ENCODE measurements at regions of chr16 and their contacts with region 1.

Region 1: DNA sequence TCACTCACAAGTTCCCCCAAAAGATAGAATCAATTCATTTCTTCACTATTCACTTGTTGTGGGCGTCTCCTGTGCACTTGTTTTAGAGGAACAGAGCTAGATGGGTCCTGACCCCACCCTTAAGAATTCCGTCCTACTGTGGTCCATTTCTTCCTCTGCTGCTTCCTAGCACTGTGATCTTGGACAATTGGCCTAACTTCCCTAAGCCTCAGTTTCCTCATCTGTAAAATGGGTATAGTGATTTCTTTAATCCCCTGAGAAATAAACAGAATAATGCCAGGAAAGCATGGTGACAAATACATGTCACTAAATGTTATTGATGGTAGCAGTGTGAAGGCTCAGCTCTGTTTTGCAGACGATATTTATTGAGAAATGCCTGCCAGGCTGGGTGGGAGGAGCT is 9.9 kb downstream of the BMERB1 start:
- DNase-seq: no peak
- ATAC-seq: no peak
- H3K4me3 Mint-ChIP-seq: no peak overlapping the region
- H3K27ac Mint-ChIP-seq: no peak overlapping the region
- H3K4me1 Mint-ChIP-seq: peaks cover 2% of the 10 kb centered on the region
- H3K27me3 Mint-ChIP-seq: peaks cover 4% of the 10 kb centered on the region

Region 2: GRCh38 chr16:15466886-15467781 is 22.9 kb after region 1 on chr16:
- POLR2A ChIA-PET with region 1: interaction called, 10 read pairs
- DNase-seq: no peak
- ATAC-seq: no peak
- H3K4me3 Mint-ChIP-seq: no peak overlapping the region
- H3K27ac Mint-ChIP-seq: no peak overlapping the region
- H3K4me1 Mint-ChIP-seq: no peaks in the 10 kb centered on the region
- H3K27me3 Mint-ChIP-seq: peaks cover 9% of the 10 kb centered on the region

Region 3: DNA sequence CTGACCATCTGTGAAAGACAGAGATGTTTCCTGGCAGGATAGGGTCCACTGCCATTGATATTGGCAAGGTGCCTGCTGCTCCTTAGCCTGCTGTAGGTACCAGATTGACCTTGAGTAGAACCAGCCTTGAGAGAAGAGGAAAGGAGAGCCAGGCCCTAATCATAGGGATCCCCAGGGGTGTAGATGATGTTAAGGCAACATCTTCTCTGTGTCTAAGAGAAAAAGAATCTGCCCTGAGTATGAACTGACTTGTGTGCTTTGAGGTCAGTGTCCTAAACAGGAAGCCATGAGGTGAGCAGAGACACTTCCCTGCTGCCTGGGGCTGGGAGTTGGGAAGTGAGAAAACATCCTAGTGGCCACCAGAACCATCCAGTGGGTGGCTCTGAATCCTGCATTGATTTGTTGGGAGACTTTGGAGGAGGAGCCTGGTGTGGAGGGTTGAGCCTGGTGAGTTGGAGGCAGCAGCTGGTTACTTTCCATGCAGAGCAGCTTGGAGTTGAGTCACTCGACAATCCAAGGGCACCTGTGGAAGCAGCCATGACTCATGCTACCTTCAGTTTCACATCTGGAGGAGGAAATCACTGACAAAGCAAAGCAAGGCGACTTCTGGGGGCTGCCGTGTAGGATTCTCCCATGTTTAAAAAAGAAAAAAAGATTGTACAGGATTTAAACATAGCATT is 37.9 kb after region 1 on chr16:
- POLR2A ChIA-PET with region 1: no interaction called
- DNase-seq: no peak
- ATAC-seq: no peak
- H3K4me3 Mint-ChIP-seq: no peak overlapping the region
- H3K27ac Mint-ChIP-seq: no peak overlapping the region
- H3K4me1 Mint-ChIP-seq: peaks cover 12% of the 10 kb centered on the region
- H3K27me3 Mint-ChIP-seq: no peaks in the 10 kb centered on the region